PC-3 (cell line): ENCODE measurements at regions of chr17 and their contacts with region 1.

Region 1: GRCh38 chr17:67376737-67377487 is at the start of gene PITPNC1:
- DNase-seq: peak; percentile 89
- ATAC-seq: peak; percentile 62
- H3K4me3 ChIP-seq: peak within 1 kb of the TSS; percentile 98
- H3K27ac ChIP-seq: peak within 1 kb of the TSS; percentile 74
- H3K4me1 ChIP-seq: peaks cover 39% of the 10 kb centered on the region
- H3K27me3 ChIP-seq: no peaks in the 10 kb centered on the region
- CTCF ChIP-seq: no peak
- total RNA-seq, gene PITPNC1: 23.1 and 25.4 TPM in 2 replicates

Region 2: DNA sequence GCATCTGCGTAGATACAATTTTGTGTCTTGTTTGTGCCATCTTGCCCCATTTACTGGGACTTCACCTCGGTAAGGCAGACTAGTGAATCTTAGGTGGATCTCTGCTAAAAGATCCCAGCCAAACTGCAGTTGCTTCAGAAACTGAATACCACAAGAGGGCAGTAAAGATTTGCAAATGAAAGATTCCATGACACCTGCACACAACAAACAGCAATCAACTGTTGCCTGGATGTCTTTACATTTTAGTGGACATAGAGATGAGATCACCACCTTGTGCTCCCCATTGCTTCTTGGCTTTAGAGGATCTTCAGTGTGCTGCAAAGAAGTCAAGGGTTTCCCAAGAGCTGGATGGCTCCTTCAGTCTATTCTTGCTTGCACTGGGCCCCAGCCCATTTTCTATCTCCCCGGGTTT is 661.2 kb before region 1 on chr17:
- CTCF ChIA-PET with region 1: no interaction called
- POLR2A ChIA-PET with region 1: no interaction called
- intact Hi-C with region 1: loop called (anchors 10 kb)
- DNase-seq: peak; percentile 92
- ATAC-seq: peak; percentile 52
- H3K4me3 ChIP-seq: no peak overlapping the region
- H3K27ac ChIP-seq: no peak overlapping the region
- H3K4me1 ChIP-seq: peaks cover 34% of the 10 kb centered on the region
- H3K27me3 ChIP-seq: no peaks in the 10 kb centered on the region
- CTCF ChIP-seq: peak; percentile 95

Region 3: DNA sequence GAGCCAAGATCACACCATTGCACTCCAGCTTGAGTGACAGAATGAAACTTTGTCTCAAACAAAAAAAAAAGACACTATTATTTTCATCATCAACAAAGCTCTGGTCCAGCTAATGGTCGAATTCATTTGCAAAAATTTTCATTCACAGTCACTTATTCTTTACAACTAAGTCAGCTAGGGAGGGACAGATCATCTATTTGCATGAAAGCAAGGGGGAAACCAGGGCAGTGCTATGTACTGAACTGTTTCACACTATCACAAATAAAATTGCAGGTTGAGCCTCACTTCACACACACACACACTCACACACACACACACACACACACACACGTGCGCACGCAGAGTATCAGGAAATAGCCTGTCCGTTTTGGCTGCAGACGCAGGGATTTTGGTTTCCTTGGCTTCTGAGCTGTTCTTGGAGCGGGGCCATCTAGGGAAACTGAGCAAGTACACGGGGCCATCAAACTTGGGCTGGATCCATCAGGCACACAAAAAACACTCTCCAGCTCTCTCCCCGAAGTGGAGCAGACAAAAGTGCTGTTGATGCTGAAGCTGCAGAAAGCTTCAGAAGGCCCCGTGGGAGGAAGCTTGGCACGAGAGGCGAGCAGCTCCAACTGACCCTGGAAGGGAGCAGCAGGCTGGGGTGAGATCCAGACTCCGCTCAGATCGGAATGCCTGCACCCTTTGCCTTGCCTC is 87.6 kb before region 1 on chr17:
- CTCF ChIA-PET with region 1: no interaction called
- POLR2A ChIA-PET with region 1: no interaction called
- intact Hi-C with region 1: no loop called
- DNase-seq: no peak
- ATAC-seq: no peak
- H3K4me3 ChIP-seq: no peak overlapping the region
- H3K27ac ChIP-seq: no peak overlapping the region
- H3K4me1 ChIP-seq: no peaks in the 10 kb centered on the region
- H3K27me3 ChIP-seq: no peaks in the 10 kb centered on the region
- CTCF ChIP-seq: no peak

Region 4: DNA sequence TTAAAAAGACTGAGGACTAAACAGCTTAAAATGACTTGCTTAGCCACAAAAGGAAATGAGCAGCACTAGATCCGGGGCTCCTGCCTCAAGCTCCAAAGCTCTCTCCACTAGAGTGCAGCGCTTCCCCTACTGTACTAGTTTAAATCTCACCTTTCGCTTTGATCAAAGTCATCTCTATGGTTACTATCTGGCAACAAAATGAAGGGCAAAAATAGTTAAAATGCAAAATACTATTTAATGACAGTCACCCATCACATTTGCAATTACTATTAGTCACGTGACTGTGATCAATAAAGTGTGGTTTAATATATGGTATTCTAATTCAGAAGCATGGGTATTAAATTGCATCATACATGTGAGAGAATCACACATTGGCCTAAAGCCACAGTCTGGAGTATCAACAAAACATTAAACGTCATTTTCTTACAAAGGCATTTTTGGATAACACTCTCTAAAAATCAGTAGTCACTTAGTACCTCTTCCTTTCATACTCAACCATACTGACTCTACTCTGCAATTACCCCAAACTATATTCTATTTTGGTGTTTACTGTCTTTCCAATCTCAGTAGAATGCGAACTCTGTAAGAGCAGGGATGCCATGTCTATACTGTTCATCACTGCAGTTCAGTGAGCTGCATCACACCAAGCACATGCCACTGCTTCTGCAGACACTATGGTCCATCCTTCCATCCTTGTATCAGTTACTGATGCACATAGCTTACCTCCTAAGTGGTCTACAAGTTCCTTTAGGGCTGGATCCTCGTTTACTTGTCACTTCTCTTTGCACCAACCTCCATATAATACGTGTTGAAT is 16.7 kb before region 1 on chr17:
- CTCF ChIA-PET with region 1: interaction called, 15 read pairs
- POLR2A ChIA-PET with region 1: interaction called, 3 read pairs
- intact Hi-C with region 1: loop called (anchors 2 kb)
- DNase-seq: peak; percentile 55
- ATAC-seq: peak; percentile 84
- H3K4me3 ChIP-seq: no peak overlapping the region
- H3K27ac ChIP-seq: no peak overlapping the region
- H3K4me1 ChIP-seq: peaks cover 22% of the 10 kb centered on the region
- H3K27me3 ChIP-seq: no peaks in the 10 kb centered on the region
- CTCF ChIP-seq: peak; percentile 77

Region 5: DNA sequence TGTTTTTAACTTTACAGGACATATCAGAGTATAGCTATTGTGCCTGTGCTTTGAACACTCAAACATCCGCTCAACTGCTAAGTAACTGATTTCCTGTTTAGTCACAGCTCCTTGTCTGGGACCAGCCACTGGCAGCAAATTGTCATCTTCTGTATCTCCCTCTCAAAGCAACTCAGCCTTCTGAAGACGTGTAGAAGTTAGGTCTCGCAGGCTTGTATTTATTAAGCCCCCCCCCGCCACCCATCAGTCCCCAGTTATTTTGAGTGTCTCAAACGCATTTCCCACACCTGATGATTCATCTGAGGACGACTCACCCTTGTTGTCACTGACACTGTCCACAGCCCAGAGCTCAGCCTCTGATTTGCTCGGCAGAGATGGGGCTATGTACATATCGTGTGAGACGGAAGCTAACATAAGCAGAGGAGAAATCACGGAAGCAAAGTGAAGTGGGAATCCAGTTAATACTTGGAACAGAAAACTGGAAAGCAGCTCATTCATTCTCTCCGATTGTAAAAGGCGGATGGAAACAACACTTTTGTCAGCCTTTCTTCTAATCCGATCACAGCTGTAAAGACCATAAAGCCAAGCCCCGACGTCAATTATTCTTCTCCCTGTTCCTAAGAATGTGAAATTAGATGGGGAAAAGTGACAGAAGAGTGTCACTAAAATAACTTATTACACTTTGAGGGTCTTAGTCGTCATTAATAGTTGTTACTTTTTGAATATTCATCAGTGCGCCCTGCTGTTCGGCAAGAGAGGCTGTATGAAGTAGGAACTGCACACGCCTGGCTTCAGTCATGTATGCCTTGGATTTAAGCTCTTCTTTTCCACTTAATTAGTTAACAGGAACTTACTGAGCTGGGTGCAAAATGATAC is 64.4 kb after region 1 on chr17:
- CTCF ChIA-PET with region 1: interaction called, 7 read pairs
- POLR2A ChIA-PET with region 1: interaction called, 3 read pairs
- intact Hi-C with region 1: loop called (anchors 1 kb)
- DNase-seq: peak; percentile 89
- ATAC-seq: peak; percentile 97
- H3K4me3 ChIP-seq: peak overlapping the region; percentile 38
- H3K27ac ChIP-seq: peak overlapping the region; percentile 91
- H3K4me1 ChIP-seq: peaks cover 17% of the 10 kb centered on the region
- H3K27me3 ChIP-seq: no peaks in the 10 kb centered on the region
- CTCF ChIP-seq: no peak

Region 6: DNA sequence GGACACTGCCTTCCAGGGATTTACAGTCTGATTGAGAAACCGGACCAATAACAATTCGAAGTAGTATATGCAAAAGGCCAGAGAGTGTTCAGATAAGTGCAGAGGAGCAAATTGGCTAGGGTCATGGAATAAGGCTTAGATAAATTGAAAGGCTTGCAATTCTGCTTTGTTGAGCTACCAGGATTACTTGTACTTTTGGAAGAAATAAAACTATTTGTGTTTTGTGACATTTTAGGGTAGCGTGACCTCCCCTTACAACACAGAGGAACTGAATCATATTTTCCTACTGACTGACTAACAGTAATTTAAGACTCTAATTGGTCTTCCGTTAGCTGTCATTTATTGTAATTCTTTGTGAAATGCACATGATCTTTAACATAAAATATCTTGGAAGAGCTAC is 104.9 kb after region 1 on chr17:
- CTCF ChIA-PET with region 1: interaction called, 10 read pairs
- POLR2A ChIA-PET with region 1: no interaction called
- intact Hi-C with region 1: no loop called
- DNase-seq: peak; percentile 81
- ATAC-seq: peak; percentile 75
- H3K4me3 ChIP-seq: no peak overlapping the region
- H3K27ac ChIP-seq: peak overlapping the region; percentile 86
- H3K4me1 ChIP-seq: peaks cover 40% of the 10 kb centered on the region
- H3K27me3 ChIP-seq: no peaks in the 10 kb centered on the region
- CTCF ChIP-seq: no peak

Region 7: DNA sequence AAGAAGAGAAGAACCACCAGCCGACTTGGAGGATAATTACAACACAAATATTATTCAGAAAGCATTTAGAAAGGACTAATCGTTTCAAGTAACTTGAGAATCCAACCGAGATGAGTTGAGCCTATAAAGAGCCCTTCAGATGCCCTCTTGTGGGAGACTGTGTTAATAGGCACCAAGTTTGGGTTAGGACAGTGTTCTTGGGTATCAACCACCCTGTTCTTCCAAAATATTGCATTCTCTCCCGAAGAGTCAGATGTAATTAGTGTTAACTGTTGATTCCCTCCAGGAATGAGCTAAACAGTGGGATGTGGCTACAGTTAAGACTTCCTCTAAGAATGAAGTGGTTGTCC is 253.0 kb after region 1 on chr17:
- CTCF ChIA-PET with region 1: no interaction called
- POLR2A ChIA-PET with region 1: no interaction called
- intact Hi-C with region 1: loop called (anchors 1 kb)
- DNase-seq: peak; percentile 80
- ATAC-seq: peak; percentile 87
- H3K4me3 ChIP-seq: no peak overlapping the region
- H3K27ac ChIP-seq: peak overlapping the region; percentile 3; the same call in 1 of the 2 replicates
- H3K4me1 ChIP-seq: no peaks in the 10 kb centered on the region
- H3K27me3 ChIP-seq: no peaks in the 10 kb centered on the region
- CTCF ChIP-seq: peak; percentile 82